MCF 10A (cell line): ENCODE measurements at regions of chr6 and their contacts with region 1.

Region 1: DNA sequence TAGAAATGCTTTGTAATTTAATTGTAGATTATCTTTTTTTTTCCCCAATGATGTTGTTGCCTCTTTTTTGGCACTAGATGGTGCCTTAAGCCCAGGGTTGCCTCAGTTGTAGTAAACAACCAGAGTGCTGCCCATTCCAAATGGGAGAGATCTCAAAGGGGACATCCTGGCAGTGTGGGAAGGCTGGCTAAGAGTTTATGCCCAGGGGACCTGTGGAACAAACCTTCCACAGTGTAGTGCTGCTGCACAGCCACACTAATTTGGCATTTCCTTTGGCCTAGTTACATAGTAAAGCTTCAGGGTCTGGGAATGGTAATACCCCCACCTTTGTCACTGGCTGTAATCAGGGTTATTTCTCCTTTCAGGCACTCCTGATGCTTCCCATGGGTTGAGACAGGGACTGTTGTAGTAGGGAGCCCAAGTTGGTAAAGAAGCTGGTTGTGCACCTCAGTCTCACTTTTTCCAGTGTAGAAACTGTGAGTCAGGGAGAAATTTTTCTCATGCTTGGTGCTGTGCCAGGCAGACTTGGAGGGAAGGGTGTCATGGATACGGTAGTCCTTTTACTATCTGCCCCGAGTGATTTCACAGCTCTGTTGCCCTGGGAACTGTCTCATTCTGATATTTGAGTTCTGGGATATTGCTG is 177.8 kb upstream of the ECI2 start:
- DNase-seq: peak; percentile 94
- H3K4me3 Mint-ChIP-seq: peak overlapping the region; percentile 52
- H3K27ac Mint-ChIP-seq: peak overlapping the region; percentile 87
- H3K4me1 Mint-ChIP-seq: peaks cover 20% of the 10 kb centered on the region
- H3K27me3 Mint-ChIP-seq: no peaks in the 10 kb centered on the region
- CTCF ChIP-seq: peak; percentile 66

Region 2: GRCh38 chr6:4402439-4402976 is 89.3 kb after region 1 on chr6:
- CTCF ChIA-PET with region 1: interaction called, 3 read pairs
- POLR2A ChIA-PET with region 1: no interaction called
- intact Hi-C with region 1: loop called (anchors 10 kb)
- DNase-seq: peak; percentile 88
- H3K4me3 Mint-ChIP-seq: peak overlapping the region; percentile 43
- H3K27ac Mint-ChIP-seq: peak overlapping the region; percentile 57
- H3K4me1 Mint-ChIP-seq: peaks cover 17% of the 10 kb centered on the region
- H3K27me3 Mint-ChIP-seq: no peaks in the 10 kb centered on the region
- CTCF ChIP-seq: no peak

Region 3: GRCh38 chr6:4775584-4776494 is 462.7 kb after region 1 on chr6 and contains the start of gene CDYL:
- CTCF ChIA-PET with region 1: interaction called, 4 read pairs
- POLR2A ChIA-PET with region 1: no interaction called
- intact Hi-C with region 1: loop called (anchors 1 kb)
- DNase-seq: peak; percentile 84
- H3K4me3 Mint-ChIP-seq: peak within 1 kb of the TSS; percentile 85
- H3K27ac Mint-ChIP-seq: peak within 1 kb of the TSS; percentile 39
- H3K4me1 Mint-ChIP-seq: peaks cover 12% of the 10 kb centered on the region
- H3K27me3 Mint-ChIP-seq: no peaks in the 10 kb centered on the region
- CTCF ChIP-seq: peak; percentile 27
- total RNA-seq, gene CDYL: 48.9 and 56.8 TPM in 2 replicates

Region 4: GRCh38 chr6:4848382-4849068 is 535.4 kb after region 1 on chr6:
- CTCF ChIA-PET with region 1: interaction called, 4 read pairs
- POLR2A ChIA-PET with region 1: no interaction called
- intact Hi-C with region 1: loop called (anchors 1 kb)
- DNase-seq: peak; percentile 22
- H3K4me3 Mint-ChIP-seq: no peak overlapping the region
- H3K27ac Mint-ChIP-seq: no peak overlapping the region
- H3K4me1 Mint-ChIP-seq: no peaks in the 10 kb centered on the region
- H3K27me3 Mint-ChIP-seq: no peaks in the 10 kb centered on the region
- CTCF ChIP-seq: peak; percentile 27

Region 5: GRCh38 chr6:4941782-4942672 is 628.9 kb after region 1 on chr6:
- CTCF ChIA-PET with region 1: interaction called, 8 read pairs
- POLR2A ChIA-PET with region 1: interaction called, 10 read pairs
- intact Hi-C with region 1: no loop called
- DNase-seq: peak; percentile 99
- H3K4me3 Mint-ChIP-seq: no peak overlapping the region
- H3K27ac Mint-ChIP-seq: no peak overlapping the region
- H3K4me1 Mint-ChIP-seq: peaks cover 28% of the 10 kb centered on the region
- H3K27me3 Mint-ChIP-seq: no peaks in the 10 kb centered on the region
- CTCF ChIP-seq: no peak

Region 6: GRCh38 chr6:5143634-5144311 is 830.6 kb after region 1 on chr6:
- CTCF ChIA-PET with region 1: interaction called, 4 read pairs
- POLR2A ChIA-PET with region 1: no interaction called
- intact Hi-C with region 1: loop called (anchors 1 kb)
- DNase-seq: peak; percentile 80
- H3K4me3 Mint-ChIP-seq: no peak overlapping the region
- H3K27ac Mint-ChIP-seq: no peak overlapping the region
- H3K4me1 Mint-ChIP-seq: no peaks in the 10 kb centered on the region
- H3K27me3 Mint-ChIP-seq: no peaks in the 10 kb centered on the region
- CTCF ChIP-seq: peak; percentile 92